Activated CD4-positive, alpha-beta T cell treated with anti-CD3 and anti-CD28 coated beads, Interleukin-2, amount 10 ng/mL, durations not matched to agents 7 days and 5 days (primary cell): ENCODE measurements at regions of chr11 and their contacts with region 1.

Region 1: GRCh38 chr11:66069715-66070603 is at the start of gene PACS1:
- DNase-seq: peak; percentile 79
- H3K4me3 Mint-ChIP-seq: peak within 1 kb of the TSS; percentile 89
- H3K27ac Mint-ChIP-seq: peak within 1 kb of the TSS; percentile 94
- H3K4me1 Mint-ChIP-seq: peaks cover 71% of the 10 kb centered on the region
- H3K27me3 Mint-ChIP-seq: no peaks in the 10 kb centered on the region
- total RNA-seq, gene PACS1: 109 TPM

Region 2: GRCh38 chr11:65927904-65928397 is 142.0 kb before region 1 on chr11:
- CTCF ChIA-PET with region 1: no interaction called
- POLR2A ChIA-PET with region 1: no interaction called
- DNase-seq: peak; percentile 93
- H3K4me3 Mint-ChIP-seq: peak overlapping the region; percentile 55
- H3K27ac Mint-ChIP-seq: peak overlapping the region; percentile 99
- H3K4me1 Mint-ChIP-seq: peaks cover 63% of the 10 kb centered on the region
- H3K27me3 Mint-ChIP-seq: no peaks in the 10 kb centered on the region

Region 3: GRCh38 chr11:66045177-66045639 is 24.8 kb before region 1 on chr11:
- CTCF ChIA-PET with region 1: interaction called, 66 read pairs
- POLR2A ChIA-PET with region 1: no interaction called
- DNase-seq: peak; percentile 87
- H3K4me3 Mint-ChIP-seq: no peak overlapping the region
- H3K27ac Mint-ChIP-seq: no peak overlapping the region
- H3K4me1 Mint-ChIP-seq: peaks cover 20% of the 10 kb centered on the region
- H3K27me3 Mint-ChIP-seq: peaks cover 2% of the 10 kb centered on the region

Region 4: DNA sequence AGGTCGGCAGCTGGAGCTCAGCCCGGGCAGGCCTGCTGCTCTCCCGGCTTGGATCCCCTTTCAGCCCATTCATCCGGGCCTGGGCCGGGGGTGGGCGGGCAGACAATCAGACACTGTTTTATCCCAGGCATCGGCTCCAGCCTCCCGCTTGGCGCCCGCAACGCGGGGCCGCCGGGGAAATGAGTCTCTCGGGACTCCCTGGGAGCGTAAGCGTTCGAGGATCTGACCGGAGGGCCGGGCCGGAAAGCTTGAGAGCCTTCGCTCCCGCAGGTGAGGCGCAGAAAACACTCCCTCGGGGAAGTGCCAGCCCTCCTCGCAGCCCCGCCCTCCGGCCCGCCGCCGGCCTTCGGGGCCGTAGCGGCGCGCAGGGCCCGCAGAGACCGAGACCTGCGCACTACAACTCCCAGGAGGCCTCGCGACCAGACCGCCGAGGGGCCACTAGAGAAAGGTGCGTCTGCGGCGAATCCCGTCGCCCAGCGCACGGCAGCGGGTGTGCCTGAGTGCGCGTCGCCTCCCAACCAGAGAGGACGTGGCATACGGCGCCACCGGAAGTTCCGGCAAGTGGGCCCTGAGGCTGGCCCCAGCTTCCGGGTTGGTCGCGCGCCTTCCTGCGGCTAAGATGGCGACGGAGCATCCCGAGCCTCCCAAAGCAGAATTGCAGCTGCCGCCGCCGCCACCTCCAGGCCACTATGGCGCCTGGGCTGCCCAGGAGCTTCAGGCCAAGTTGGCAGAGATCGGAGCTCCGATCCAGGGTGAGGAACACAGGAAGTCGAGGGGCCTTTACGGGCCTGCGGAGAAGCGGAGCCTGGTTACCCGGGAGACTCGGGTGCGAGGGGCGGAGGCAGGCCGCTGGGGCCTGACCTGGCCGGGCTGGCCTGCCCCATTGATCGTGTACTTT is 17.9 kb before region 1 on chr11 and contains the start of gene SF3B2:
- CTCF ChIA-PET with region 1: interaction called, 66 read pairs
- POLR2A ChIA-PET with region 1: no interaction called
- DNase-seq: peak; percentile 98
- H3K4me3 Mint-ChIP-seq: peak within 1 kb of the TSS; percentile 100
- H3K27ac Mint-ChIP-seq: peak within 1 kb of the TSS; percentile 95
- H3K4me1 Mint-ChIP-seq: peaks cover 40% of the 10 kb centered on the region
- H3K27me3 Mint-ChIP-seq: peaks cover 2% of the 10 kb centered on the region
- total RNA-seq, gene SF3B2: 217 to 223 TPM

Region 5: GRCh38 chr11:66081505-66081904 is 11.5 kb after region 1 on chr11:
- CTCF ChIA-PET with region 1: interaction called, 36 read pairs
- POLR2A ChIA-PET with region 1: interaction called, 8 read pairs
- DNase-seq: peak; percentile 90
- H3K4me3 Mint-ChIP-seq: peak overlapping the region; percentile 84
- H3K27ac Mint-ChIP-seq: peak overlapping the region; percentile 99
- H3K4me1 Mint-ChIP-seq: peaks cover 77% of the 10 kb centered on the region
- H3K27me3 Mint-ChIP-seq: no peaks in the 10 kb centered on the region